ENCODE measurements at regions of chr3 and their contacts with region 1.

Region 1: DNA sequence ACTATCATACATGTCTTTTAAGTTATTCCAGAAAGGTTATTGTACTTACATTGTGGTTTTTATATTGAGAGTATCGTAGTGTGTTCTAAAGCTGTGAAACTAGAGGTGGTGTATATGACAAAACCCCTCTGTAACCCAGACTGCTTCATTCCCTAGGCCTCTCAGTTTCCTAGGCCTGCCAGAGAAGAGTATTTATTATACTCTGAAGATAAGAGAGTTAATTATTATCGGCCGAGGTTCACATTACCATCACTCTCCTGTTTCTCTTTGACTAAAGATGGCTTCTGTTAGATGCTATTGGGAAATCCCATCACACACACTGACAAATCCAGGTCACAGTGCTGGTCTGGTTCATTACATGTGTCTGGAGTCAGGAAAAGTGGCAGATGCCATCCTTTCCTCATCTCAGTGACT is 20.5 kb downstream of the EXOSC7 start:
- DNase-seq: no peak
- H3K4me3 Mint-ChIP-seq: no peak overlapping the region
- H3K27ac Mint-ChIP-seq: peak overlapping the region; percentile 6
- H3K4me1 Mint-ChIP-seq: peaks cover 29% of the 10 kb centered on the region
- H3K27me3 Mint-ChIP-seq: no peaks in the 10 kb centered on the region

Region 2: DNA sequence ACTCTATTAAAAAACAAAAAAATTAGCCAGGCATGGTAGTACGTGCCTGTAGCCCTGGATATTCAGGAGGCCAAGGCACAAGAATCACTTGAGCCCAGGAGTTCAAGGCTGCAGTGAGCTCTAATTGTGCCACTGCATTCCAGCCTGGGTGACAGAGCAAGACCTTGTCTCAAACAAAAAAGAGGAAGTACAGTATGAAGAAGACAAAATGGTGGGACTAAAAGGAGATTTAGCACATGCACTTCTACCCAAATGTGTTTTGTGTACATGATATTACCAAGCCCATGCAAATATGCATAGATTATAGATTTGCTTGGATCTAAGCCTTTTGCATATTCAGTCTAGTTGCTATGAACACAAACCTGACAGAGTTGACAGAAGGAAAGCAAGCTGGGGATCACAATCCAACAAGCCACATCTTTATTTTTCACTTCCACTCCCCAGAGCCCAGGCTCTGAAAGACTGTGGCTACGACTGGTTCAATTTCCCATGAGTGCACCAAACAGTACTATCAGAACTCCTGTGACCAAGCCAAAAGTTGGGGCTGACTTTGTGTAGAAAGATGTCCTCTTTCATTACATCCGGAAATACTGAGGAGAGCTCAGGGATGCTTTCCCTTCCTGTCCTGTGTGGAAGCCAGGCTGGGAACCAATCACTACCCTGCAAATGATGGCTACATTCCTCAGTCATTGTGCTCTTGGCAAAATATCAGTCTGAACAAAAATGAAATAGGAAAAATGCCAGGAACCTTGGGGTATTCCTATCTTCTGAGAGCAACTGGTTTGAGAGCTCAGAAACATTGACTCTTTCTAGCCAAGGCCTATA is 72.7 kb before region 1 on chr3:
- intact Hi-C with region 1: no loop called
- DNase-seq: no peak
- H3K4me3 Mint-ChIP-seq: no peak overlapping the region
- H3K27ac Mint-ChIP-seq: no peak overlapping the region
- H3K4me1 Mint-ChIP-seq: no peaks in the 10 kb centered on the region
- H3K27me3 Mint-ChIP-seq: no peaks in the 10 kb centered on the region

Region 3: DNA sequence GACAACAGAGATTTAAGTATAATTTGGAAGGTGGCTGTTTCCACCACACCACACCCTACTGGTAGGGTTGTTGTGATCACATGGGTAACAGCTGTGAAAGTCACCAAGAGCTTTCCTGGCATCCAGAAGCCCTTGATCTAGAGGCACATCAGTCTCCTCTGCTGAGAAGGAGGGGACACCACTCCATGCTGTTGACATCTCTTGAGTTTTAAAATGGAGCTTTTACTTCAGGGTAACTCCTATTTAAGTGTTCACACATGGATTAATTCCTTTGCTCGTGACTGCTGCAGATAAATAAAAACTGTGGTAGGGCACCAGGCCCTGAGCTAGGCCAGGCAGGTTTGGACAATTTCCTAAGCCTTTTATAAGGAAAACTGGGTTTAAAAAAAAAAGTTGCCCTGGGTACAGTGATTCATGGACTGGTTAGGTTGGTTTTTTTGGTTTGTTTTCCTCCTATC is 13.1 kb before region 1 on chr3:
- intact Hi-C with region 1: loop called (anchors 1 kb)
- DNase-seq: no peak
- H3K4me3 Mint-ChIP-seq: no peak overlapping the region
- H3K27ac Mint-ChIP-seq: no peak overlapping the region
- H3K4me1 Mint-ChIP-seq: peaks cover 69% of the 10 kb centered on the region
- H3K27me3 Mint-ChIP-seq: no peaks in the 10 kb centered on the region

Region 4: DNA sequence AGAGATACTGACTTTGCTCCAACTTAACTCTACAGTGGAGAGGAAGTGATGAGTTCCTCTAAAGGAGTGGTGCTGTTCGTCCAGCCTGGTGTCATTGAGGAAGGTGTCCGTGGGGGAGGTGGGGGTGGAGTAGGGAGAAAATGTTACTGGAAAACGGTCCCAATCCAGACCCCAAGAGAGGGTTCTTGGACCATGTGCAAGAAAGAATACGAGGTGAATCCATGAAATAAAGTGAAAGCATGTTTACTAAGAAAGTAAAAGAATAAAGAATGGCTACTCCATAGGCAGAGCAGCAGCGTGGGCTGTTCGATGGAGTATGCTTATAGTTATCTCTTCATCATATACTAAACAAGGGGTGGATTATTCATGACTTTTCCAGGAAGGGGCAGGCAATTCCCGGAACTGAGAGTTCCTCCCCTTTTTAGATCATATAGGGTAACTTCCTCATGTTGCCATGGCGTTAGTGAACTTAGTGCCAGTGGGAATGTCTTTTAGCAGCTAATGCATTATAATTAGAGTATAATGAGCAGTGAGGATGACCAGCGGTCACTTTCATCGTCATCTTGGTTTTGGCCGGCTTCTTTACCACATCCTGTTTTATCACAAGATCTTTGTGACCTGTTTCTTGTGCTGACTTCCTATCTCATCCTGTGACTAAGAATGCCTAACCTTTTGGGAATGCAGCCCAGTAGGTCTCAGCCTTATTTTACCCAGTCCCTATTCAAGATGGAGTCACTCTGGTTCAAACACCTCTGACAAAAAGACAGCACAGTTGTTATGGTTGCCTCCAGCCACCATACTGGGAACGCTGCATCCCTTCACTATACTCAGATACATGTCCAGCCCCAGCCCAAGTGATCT is 68.2 kb after region 1 on chr3:
- intact Hi-C with region 1: no loop called
- DNase-seq: peak; percentile 30
- H3K4me3 Mint-ChIP-seq: peak overlapping the region; percentile 63
- H3K27ac Mint-ChIP-seq: peak overlapping the region; percentile 82
- H3K4me1 Mint-ChIP-seq: peaks cover 30% of the 10 kb centered on the region
- H3K27me3 Mint-ChIP-seq: peaks cover 15% of the 10 kb centered on the region

Measured in activated T-helper 1 cell treated with anti-CD3 and anti-CD28 coated beads, Interleukin-12 subunit alpha, Interleukin-12 subunit beta, Interleukin-2, Interleukin-4 antibody, amounts not matched to agents 30 ng/mL and 10 ng/mL and 1 ng/mL, durations not matched to agents 14 hours and 24 hours and 36 hours (primary cell).